ENCODE measurements at regions of chr17 and their contacts with region 1.

Region 1: DNA sequence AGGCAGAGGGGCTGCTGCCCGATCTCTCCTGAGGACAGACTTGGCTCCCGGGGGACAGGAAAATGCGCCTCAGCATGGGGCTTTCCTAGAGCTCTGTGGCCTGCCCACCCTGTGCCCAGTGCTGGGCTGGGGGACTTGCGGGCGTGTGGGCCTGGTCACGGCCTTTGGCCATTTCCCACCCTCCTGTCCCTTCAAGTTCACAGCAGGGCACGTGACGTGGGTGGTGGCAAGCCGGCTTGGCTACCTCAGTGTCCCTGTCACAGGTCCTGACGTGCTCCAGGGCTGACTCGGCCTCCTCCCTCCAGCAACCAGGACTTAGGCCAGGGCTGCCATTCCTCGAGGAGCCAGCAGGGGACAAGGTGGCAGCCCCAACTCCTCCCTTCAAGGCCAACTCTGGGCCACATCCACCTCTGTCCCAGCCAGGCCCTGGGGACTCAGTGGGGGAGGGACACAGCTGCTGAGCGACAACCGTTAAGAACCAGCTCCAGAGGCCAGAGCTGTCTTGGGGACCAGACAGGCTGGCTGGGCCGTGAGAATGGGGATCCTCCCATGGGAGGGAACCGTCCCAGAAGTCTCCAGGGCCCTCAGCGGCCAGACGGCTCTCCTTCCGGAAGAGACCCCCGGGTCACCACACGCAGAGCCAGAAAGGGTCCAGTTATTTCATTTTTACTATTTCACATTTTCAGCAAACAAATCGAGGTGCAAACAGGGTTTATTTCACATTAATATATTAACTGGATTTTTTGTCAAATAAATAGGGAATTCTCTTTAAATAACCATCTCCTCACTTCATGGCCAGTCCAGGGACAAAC is 1.1 kb upstream of the UNC13D start:
- DNase-seq: peak; percentile 85
- ATAC-seq: peak; percentile 71
- H3K4me3 Mint-ChIP-seq: peak overlapping the region; percentile 55
- H3K27ac Mint-ChIP-seq: peak overlapping the region; percentile 60
- H3K4me1 Mint-ChIP-seq: peaks cover 14% of the 10 kb centered on the region
- H3K27me3 Mint-ChIP-seq: no peaks in the 10 kb centered on the region

Region 2: DNA sequence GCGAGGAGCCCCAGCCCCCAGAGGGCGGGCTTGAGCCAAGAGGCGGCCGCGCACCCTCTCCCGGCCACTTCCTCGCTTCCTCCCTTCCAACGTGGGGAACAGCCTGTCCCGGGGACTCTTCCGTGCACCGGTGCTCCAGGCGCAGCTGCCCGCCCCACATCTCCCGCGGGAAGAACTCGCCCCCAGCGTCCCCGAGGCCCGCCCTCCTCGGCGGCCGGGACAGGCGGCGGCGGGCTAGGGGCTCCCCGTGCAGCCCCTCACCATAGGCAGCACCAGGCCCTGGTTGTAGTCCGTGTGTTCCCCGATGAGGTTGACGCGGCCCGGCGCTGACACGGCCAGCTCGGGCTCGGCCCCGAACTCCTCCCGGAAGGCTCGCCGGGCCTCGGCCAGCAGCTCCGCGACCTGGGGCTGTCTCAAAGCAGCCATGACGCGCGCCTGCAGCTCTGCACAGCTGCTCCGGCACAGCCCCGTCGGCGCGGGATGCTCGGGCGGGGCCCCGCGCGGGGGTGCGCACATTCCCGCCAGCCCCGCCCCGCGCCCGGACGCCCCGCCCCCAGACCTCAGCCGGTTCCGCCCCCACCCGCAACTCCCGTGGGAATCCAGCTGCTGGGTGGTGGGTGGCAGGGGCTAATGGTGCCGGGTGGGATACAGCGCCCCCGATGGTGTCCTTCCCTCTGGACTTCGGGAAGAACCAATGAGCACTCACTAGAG is 80.4 kb before region 1 on chr17 and contains the start of gene GALK1:
- CTCF ChIA-PET with region 1: interaction called, 15 read pairs
- POLR2A ChIA-PET with region 1: no interaction called
- intact Hi-C with region 1: no loop called
- DNase-seq: peak; percentile 90
- ATAC-seq: peak; percentile 95
- H3K4me3 Mint-ChIP-seq: peak within 1 kb of the TSS; percentile 80
- H3K27ac Mint-ChIP-seq: peak within 1 kb of the TSS; percentile 83
- H3K4me1 Mint-ChIP-seq: peaks cover 3% of the 10 kb centered on the region
- H3K27me3 Mint-ChIP-seq: no peaks in the 10 kb centered on the region
- total RNA-seq, gene GALK1: 50.3 to 63.2 TPM

Region 3: DNA sequence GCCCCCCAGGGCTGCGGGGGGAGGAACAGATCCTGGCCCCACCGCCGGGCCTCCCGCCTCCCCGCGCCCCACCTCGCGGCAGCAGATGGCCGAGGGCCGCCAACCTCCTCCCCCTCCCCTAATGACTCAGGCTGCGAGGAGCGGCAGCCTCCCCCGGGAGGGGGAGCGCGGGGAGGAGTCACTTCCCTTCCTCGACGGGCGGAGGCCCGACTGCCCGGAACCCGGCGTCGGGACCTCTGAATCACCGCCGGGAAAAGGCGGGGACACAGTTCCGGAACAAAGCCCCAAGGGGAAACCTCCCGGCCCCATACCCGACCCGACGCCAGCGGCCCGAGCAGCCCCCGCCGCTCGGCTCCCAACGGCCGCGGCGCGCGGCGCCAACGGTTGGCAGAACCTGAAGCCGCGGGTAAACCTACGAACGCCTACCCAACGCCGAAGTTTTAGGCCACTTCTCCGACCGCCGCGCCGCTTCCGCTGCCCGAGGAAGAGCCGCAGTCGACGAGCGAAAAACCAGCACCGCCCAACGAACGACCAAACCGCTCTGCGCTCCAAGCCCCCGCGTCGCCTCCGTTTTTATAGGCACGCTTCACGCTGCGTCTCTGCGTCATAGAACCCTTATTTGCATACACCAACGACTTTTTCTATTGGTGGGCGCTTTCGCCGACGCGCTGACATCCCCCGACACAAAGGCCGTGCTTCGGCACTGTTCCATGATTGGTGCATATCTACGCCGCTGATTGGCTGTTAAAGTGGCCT is 65.8 kb before region 1 on chr17:
- CTCF ChIA-PET with region 1: interaction called, 6 read pairs
- POLR2A ChIA-PET with region 1: interaction called, 17 read pairs
- intact Hi-C with region 1: loop called in 1 of 2 experiments (anchors 5 kb)
- DNase-seq: peak; percentile 96
- ATAC-seq: peak; percentile 69
- H3K4me3 Mint-ChIP-seq: peak overlapping the region; percentile 98
- H3K27ac Mint-ChIP-seq: peak overlapping the region; percentile 99
- H3K4me1 Mint-ChIP-seq: peaks cover 46% of the 10 kb centered on the region
- H3K27me3 Mint-ChIP-seq: peaks cover 1% of the 10 kb centered on the region

Region 4: GRCh38 chr17:75832652-75833400 is 12.4 kb before region 1 on chr17:
- CTCF ChIA-PET with region 1: interaction called, 16 read pairs
- POLR2A ChIA-PET with region 1: no interaction called
- intact Hi-C with region 1: no loop called
- DNase-seq: peak; percentile 54
- ATAC-seq: peak; percentile 54
- H3K4me3 Mint-ChIP-seq: peak overlapping the region; percentile 61
- H3K27ac Mint-ChIP-seq: peak overlapping the region; percentile 84
- H3K4me1 Mint-ChIP-seq: peaks cover 33% of the 10 kb centered on the region
- H3K27me3 Mint-ChIP-seq: no peaks in the 10 kb centered on the region

Region 5: DNA sequence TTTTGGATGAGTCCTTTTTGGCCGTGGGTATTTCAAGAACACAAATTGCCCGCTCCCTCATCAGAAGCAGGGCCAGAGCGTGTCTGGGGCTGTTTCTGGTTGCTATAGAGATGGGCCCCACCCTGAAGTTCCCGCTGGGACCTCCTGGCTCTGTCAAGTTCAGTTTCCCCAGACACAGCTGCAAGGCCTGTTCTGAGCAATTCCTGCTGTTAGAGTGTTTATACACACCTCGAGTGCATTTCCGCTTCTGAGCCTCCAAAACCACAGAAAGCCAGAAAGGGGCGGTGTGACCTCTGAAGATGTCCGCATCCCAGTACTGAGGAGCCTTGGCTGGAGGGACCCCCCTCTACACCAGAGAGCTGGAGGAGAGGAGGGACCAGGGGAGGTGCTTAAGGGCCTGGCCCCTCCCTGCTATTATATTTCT is 19.2 kb after region 1 on chr17:
- CTCF ChIA-PET with region 1: interaction called, 42 read pairs
- POLR2A ChIA-PET with region 1: interaction called, 8 read pairs
- intact Hi-C with region 1: no loop called
- DNase-seq: peak; percentile 74
- ATAC-seq: peak; percentile 77
- H3K4me3 Mint-ChIP-seq: no peak overlapping the region
- H3K27ac Mint-ChIP-seq: peak overlapping the region; percentile 87
- H3K4me1 Mint-ChIP-seq: peaks cover 20% of the 10 kb centered on the region
- H3K27me3 Mint-ChIP-seq: no peaks in the 10 kb centered on the region

Region 6: GRCh38 chr17:75877752-75878173 is 32.5 kb after region 1 on chr17:
- CTCF ChIA-PET with region 1: interaction called, 5 read pairs
- POLR2A ChIA-PET with region 1: no interaction called
- intact Hi-C with region 1: loop called in 1 of 2 experiments (anchors 1 kb)
- DNase-seq: peak; percentile 87
- ATAC-seq: peak; percentile 72
- H3K4me3 Mint-ChIP-seq: peak overlapping the region; percentile 91
- H3K27ac Mint-ChIP-seq: peak overlapping the region; percentile 94
- H3K4me1 Mint-ChIP-seq: peaks cover 26% of the 10 kb centered on the region
- H3K27me3 Mint-ChIP-seq: peaks cover 2% of the 10 kb centered on the region